K562 (cell line): ENCODE measurements at regions of chr6 and their contacts with region 1.

Region 1: GRCh38 chr6:43803783-43804549 is 34.0 kb downstream of the VEGFA start:
- DNase-seq: peak in 1 of 4 experiments; percentile 52
- ATAC-seq: peak; percentile 8; the same call in 1 of the 3 replicates
- H3K4me3 ChIP-seq: no peak overlapping the region
- H3K27ac ChIP-seq: peak overlapping the region; percentile 31; the same call in 2 of the 3 replicates
- H3K4me1 ChIP-seq: peaks cover 35 to 50% of the 10 kb centered on the region in 2 experiments
- H3K27me3 ChIP-seq: no peaks in the 10 kb centered on the region
- CTCF ChIP-seq: no peak
- EP300 ChIP-seq: 0 out of 2 replicates have a peak, but pooled peaks have one; percentile 6
- POLR2A ChIP-seq: no peak
- RAD21 ChIP-seq: no peak

Region 2: DNA sequence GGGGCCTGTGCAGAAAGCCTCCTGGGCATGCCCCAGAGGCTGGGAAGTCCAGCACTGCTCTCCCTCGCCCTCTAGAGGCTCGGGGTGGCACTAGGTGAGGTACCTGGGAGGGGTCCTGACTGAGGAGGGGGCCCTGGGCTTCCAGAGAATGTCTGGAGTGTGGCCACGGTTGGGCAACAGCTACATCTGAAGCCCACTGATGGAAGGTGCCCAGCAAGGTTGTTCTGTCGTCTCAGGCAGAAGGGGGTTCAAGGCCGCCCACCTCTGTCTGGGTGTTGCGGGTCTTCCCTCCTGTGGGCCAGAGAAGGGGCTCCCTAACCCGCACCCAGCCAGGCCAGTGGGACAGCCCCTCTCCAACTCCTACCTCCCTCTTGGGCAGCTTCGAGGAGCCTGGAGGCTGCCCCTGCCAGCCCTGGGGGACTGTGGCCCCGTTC is 45.3 kb before region 1 on chr6:
- CTCF ChIA-PET with region 1: no interaction called
- POLR2A ChIA-PET with region 1: no interaction called
- in situ Hi-C with region 1: no loop called
- intact Hi-C with region 1: no loop called
- DNase-seq: peak; percentile 57 to 79 (median 77)
- ATAC-seq: peak; percentile 91
- H3K4me3 ChIP-seq: no peak overlapping the region
- H3K27ac ChIP-seq: no peak overlapping the region
- H3K4me1 ChIP-seq: peaks cover 6 to 10% of the 10 kb centered on the region in 2 experiments; a peak in 3 of 5 replicates
- H3K27me3 ChIP-seq: peaks cover 10 to 31% of the 10 kb centered on the region in 2 experiments; a peak in 4 of 5 replicates
- CTCF ChIP-seq: peak; percentile 80 to 94 (median 85)
- EP300 ChIP-seq: no peak
- POLR2A ChIP-seq: no peak
- RAD21 ChIP-seq: peak; percentile 73 to 81

Region 3: GRCh38 chr6:43790025-43790523 is 13.9 kb before region 1 on chr6:
- CTCF ChIA-PET with region 1: no interaction called
- POLR2A ChIA-PET with region 1: interaction called, 10 read pairs
- in situ Hi-C with region 1: no loop called
- intact Hi-C with region 1: loop called (anchors 2 kb)
- DNase-seq: peak in 1 of 4 experiments; percentile 18
- ATAC-seq: no peak; the same call in 2 of the 3 replicates
- H3K4me3 ChIP-seq: no peak overlapping the region
- H3K27ac ChIP-seq: no peak overlapping the region
- H3K4me1 ChIP-seq: peaks cover 6 to 14% of the 10 kb centered on the region in 2 experiments; a peak in 3 of 5 replicates
- H3K27me3 ChIP-seq: no peaks in the 10 kb centered on the region
- CTCF ChIP-seq: no peak
- EP300 ChIP-seq: no peak
- POLR2A ChIP-seq: no peak
- RAD21 ChIP-seq: no peak

Region 4: DNA sequence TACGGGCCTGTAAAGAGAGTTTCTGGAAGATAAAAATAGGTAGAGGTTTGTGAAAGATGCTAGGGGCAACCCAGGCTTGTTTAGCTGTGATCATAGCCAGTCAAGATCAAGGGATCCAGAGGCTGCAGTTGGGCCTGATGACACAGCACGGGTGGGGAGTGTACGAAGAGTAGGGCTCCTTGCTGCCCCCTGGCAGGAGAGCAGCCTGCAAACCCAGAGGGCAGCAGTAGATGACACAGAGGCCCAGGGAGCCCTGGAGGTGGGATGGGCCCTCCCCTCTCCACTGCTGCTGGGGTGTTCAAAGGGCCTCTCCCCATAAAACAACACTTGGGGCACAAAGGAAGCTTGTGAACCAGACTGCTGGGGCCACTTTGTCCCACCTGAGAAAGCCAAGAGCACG is 13.2 kb after region 1 on chr6:
- CTCF ChIA-PET with region 1: interaction called, 4 read pairs
- POLR2A ChIA-PET with region 1: interaction called, 11 read pairs
- in situ Hi-C with region 1: no loop called
- intact Hi-C with region 1: no loop called
- DNase-seq: peak; percentile 69 to 81 (median 72)
- ATAC-seq: peak; percentile 96
- H3K4me3 ChIP-seq: no peak overlapping the region
- H3K27ac ChIP-seq: no peak overlapping the region
- H3K4me1 ChIP-seq: peaks cover 0 to 12% of the 10 kb centered on the region in 2 experiments; a peak in 3 of 5 replicates
- H3K27me3 ChIP-seq: no peaks in the 10 kb centered on the region
- CTCF ChIP-seq: peak; percentile 78 to 85 (median 80)
- EP300 ChIP-seq: peak; percentile 35; the same call in 1 of the 2 replicates
- POLR2A ChIP-seq: no peak
- RAD21 ChIP-seq: peak; percentile 32 to 69; a peak in 3 of 4 replicates

Region 5: DNA sequence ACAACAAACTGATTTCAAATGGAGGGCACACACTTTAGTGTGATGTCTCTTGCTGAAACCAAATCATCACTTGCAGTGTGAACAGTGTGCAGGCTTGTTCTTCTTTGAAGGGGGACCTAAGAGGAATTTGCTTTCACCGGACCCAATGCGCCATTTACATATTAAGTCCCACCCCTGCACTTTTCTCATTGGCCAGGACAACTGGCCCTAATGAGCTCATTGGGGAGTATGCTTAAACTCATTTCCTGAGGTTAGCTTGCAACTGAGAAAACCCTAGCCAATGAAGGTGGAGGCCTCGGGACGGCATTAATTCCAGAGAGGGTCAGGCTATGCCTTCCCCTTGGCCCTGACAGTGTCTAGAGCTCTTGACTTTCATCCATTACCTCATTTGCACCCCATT is 24.7 kb after region 1 on chr6:
- CTCF ChIA-PET with region 1: no interaction called
- POLR2A ChIA-PET with region 1: interaction called, 13 read pairs
- in situ Hi-C with region 1: no loop called
- intact Hi-C with region 1: no loop called
- DNase-seq: peak; percentile 82 to 95 (median 94)
- ATAC-seq: peak; percentile 95
- H3K4me3 ChIP-seq: no peak overlapping the region
- H3K27ac ChIP-seq: no peak overlapping the region
- H3K4me1 ChIP-seq: peaks cover 7 to 20% of the 10 kb centered on the region in 2 experiments; a peak in 4 of 5 replicates
- H3K27me3 ChIP-seq: peaks cover 13 to 15% of the 10 kb centered on the region in 2 experiments; a peak in 3 of 5 replicates
- CTCF ChIP-seq: no peak
- EP300 ChIP-seq: no peak
- POLR2A ChIP-seq: no peak
- RAD21 ChIP-seq: no peak